Dendritic cell treated with granulocyte-macrophage colony-stimulating factor and Interleukin-4, amounts not matched to agents 40 ng/mL and 50 ng/mL, for 4 days (primary cell): ENCODE measurements at regions of chr7 and their contacts with region 1.

Region 1: DNA sequence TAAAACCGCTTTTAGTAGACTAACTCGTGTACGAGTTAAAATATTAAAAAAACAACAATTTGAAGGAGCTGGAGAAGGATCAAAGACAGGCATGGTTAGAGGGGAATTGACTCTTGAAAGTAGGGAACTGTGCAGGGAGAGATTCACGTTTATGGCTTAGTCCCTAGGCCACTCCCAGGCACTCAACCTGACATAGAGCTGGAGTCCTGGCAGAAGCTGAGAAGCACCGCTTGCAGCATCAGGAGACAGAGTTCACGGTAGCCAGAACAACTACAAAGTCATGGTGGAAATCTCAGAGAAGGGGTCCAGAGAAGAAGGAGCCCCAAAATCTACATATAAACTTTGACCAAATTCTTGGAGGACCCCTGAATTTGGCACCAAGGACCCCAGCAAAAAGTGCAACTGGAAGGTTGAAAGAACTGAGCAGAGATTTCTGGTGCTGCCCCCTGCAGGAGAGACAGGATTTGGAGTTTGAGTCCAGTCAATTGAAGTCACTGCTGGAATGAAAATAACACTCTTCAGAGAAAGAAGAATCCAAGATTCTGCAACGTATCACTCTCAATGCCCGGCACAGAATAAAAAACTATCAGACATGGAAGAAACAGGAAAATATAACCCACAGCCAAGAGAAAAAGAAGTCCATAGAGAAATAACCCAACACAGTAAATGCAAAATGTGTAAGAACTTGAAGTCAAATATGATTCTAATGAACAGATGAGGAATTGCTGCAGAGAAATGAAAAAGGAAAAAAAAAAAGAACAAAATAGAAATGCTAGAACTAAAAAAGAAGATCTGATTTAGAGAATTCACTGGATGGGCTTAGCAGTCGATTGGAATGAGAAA is 493.3 kb upstream of the PODXL start:
- H3K4me3 Mint-ChIP-seq: no peak overlapping the region
- H3K27ac Mint-ChIP-seq: no peak overlapping the region
- H3K4me1 Mint-ChIP-seq: no peaks in the 10 kb centered on the region
- H3K27me3 Mint-ChIP-seq: peaks cover 5% of the 10 kb centered on the region

Region 2: GRCh38 chr7:131527456-131527855 is 522.2 kb before region 1 on chr7:
- intact Hi-C with region 1: no loop called
- H3K4me3 Mint-ChIP-seq: no peak overlapping the region
- H3K27ac Mint-ChIP-seq: no peak overlapping the region
- H3K4me1 Mint-ChIP-seq: peaks cover 5% of the 10 kb centered on the region
- H3K27me3 Mint-ChIP-seq: no peaks in the 10 kb centered on the region

Region 3: GRCh38 chr7:131688738-131689661 is 360.7 kb before region 1 on chr7:
- intact Hi-C with region 1: loop called (anchors 2 kb)
- H3K4me3 Mint-ChIP-seq: no peak overlapping the region
- H3K27ac Mint-ChIP-seq: no peak overlapping the region
- H3K4me1 Mint-ChIP-seq: peaks cover 6% of the 10 kb centered on the region
- H3K27me3 Mint-ChIP-seq: peaks cover 20% of the 10 kb centered on the region

Region 4: GRCh38 chr7:131859147-131859821 is 190.4 kb before region 1 on chr7:
- intact Hi-C with region 1: loop called (anchors 2 kb)
- H3K4me3 Mint-ChIP-seq: no peak overlapping the region
- H3K27ac Mint-ChIP-seq: no peak overlapping the region
- H3K4me1 Mint-ChIP-seq: no peaks in the 10 kb centered on the region
- H3K27me3 Mint-ChIP-seq: no peaks in the 10 kb centered on the region

Region 5: DNA sequence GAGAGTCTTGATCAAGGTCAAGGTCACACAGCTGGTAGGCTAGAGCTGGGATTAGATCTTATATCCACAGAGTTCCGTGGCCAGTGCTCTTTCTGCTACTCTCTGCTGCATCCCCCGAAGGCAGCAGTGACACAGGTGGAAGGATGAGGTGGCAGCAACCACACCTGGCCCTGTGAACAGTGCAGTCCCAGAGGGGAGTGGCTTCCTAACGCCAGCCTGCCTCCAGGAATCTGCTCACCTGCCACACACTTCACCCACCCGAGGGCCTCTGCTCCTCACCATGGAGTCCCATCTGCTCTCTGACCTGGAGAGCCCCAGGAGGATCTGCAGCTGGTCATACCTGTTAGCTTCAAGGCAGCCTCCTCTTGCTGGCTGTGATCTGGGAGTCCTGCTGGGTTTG is 42.4 kb after region 1 on chr7:
- intact Hi-C with region 1: no loop called
- H3K4me3 Mint-ChIP-seq: no peak overlapping the region
- H3K27ac Mint-ChIP-seq: no peak overlapping the region
- H3K4me1 Mint-ChIP-seq: no peaks in the 10 kb centered on the region
- H3K27me3 Mint-ChIP-seq: no peaks in the 10 kb centered on the region